Transverse colon (tissue), 4 donors: ENCODE measurements at regions of chr3 and their contacts with region 1.

Region 1: GRCh38 chr3:36132214-36132613 is 248.1 kb upstream of the STAC start:
- DNase-seq: no peak
- H3K4me3 ChIP-seq: no peak overlapping the region
- H3K27ac ChIP-seq: no peak overlapping the region
- H3K4me1 ChIP-seq: no peaks in the 10 kb centered on the region
- H3K27me3 ChIP-seq: no peaks in the 10 kb centered on the region
- CTCF ChIP-seq: no peak
- EP300 ChIP-seq: no peak
- POLR2A ChIP-seq: no peak

Region 2: GRCh38 chr3:36332139-36332538 is 199.9 kb after region 1 on chr3:
- in situ Hi-C with region 1: loop called in 1 of 4 experiments (anchors 25 kb)
- intact Hi-C with region 1: no loop called
- DNase-seq: no peak
- H3K4me3 ChIP-seq: no peak overlapping the region
- H3K27ac ChIP-seq: no peak overlapping the region
- H3K4me1 ChIP-seq: no peaks in the 10 kb centered on the region
- H3K27me3 ChIP-seq: no peaks in the 10 kb centered on the region
- CTCF ChIP-seq: no peak
- EP300 ChIP-seq: no peak
- POLR2A ChIP-seq: no peak